Motor neuron (in vitro differentiated cells): ENCODE measurements at regions of chr7 and their contacts with region 1.

Region 1: GRCh38 chr7:98745722-98746318 is 124.0 kb downstream of the TMEM130 start:
- ATAC-seq: peak in 3 of 8 experiments; percentile 26 to 76 (median 26)
- H3K4me3 ChIP-seq: no peak overlapping the region
- H3K27ac ChIP-seq: no peak overlapping the region
- H3K4me1 ChIP-seq: no peaks in the 10 kb centered on the region

Region 2: GRCh38 chr7:98434095-98434494 is 311.7 kb before region 1 on chr7:
- in situ Hi-C with region 1: loop called in 1 of 9 experiments (anchors 10 kb)
- ATAC-seq: no peak
- H3K4me3 ChIP-seq: no peak overlapping the region
- H3K27ac ChIP-seq: no peak overlapping the region
- H3K4me1 ChIP-seq: no peaks in the 10 kb centered on the region